ENCODE measurements at regions of chr9 and their contacts with region 1.

Region 1: GRCh38 chr9:80632041-80632440 is 1057.3 kb downstream of the TLE1 start:
- DNase-seq: no peak
- H3K4me3 ChIP-seq: no peak overlapping the region
- H3K27ac ChIP-seq: no peak overlapping the region
- H3K4me1 ChIP-seq: no peaks in the 10 kb centered on the region
- H3K27me3 ChIP-seq: no peaks in the 10 kb centered on the region
- CTCF ChIP-seq: no peak

Region 2: GRCh38 chr9:80382211-80382891 is 249.7 kb before region 1 on chr9:
- intact Hi-C with region 1: no loop called
- DNase-seq: no peak
- H3K4me3 ChIP-seq: no peak overlapping the region
- H3K27ac ChIP-seq: no peak overlapping the region
- H3K4me1 ChIP-seq: no peaks in the 10 kb centered on the region
- H3K27me3 ChIP-seq: no peaks in the 10 kb centered on the region
- CTCF ChIP-seq: no peak

Region 3: DNA sequence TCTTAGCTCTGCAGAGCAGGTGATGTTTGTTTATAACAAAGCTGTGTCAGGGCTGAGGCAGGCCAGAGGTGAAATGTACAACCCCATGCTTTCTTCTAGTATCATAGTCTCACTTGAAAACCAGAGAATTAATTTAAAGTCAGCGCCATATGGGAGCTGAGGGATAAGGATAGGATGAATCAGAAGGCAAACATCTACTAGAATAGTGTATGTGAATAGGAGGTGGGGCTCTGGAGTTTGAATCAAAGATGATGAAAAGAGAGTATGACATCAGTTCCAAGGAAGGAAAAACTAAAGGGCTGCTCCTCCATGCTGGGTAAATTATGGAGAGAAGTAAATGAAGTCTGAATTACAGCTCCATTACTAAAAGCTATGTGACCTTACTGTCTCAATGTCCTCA is 1989.4 kb after region 1 on chr9:
- intact Hi-C with region 1: loop called (anchors 10 kb)
- DNase-seq: no peak
- H3K4me3 ChIP-seq: no peak overlapping the region
- H3K27ac ChIP-seq: no peak overlapping the region
- H3K4me1 ChIP-seq: no peaks in the 10 kb centered on the region
- H3K27me3 ChIP-seq: peaks cover 16% of the 10 kb centered on the region
- CTCF ChIP-seq: no peak